ENCODE measurements at regions of chr20 and their contacts with region 1.

Region 1: DNA sequence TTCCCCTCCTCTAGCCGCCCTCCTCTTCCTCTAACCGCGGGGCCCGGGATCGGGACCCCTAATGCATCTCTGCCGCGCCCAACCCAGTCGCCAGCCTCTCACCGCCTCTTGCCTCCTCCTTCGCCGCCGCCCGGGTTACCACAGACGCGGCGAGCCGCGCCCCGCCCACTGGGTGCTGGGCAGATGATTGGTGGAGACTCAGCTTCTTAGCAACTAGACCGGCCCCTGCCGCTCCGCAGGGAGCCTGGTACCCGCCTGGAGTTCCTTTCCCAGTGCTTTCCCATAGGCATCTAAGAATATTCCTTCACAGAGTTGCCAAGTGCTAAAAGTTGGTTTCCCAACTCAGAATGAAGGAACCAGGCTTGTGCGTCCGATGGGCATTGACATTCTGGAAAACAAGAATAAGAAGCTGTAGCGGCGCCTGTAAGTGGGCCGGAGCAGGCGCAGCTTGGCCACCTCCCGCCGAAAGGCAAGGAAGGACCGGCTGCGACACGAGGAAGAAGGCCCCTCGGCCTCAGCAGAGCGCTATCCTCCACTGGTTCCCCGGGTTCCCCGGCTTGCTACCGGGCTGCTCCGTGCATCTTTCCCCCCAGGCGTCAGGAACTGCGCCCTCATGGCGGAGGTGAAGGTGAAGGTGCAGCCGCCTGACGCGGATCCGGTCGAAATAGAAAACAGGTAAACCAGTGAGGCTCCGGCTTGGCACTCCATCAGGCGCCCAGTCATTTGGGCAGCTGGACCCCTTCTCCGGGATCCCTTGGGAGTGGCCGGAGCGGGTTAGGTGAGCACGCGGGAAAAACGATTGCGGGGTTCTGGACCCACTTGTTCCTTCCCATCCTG is at the starts of genes DZANK1 and POLR3F:
- DNase-seq: peak; percentile 92
- H3K4me3 ChIP-seq: peak within 1 kb of the TSS; percentile 74 to 96 (median 82)
- H3K27ac ChIP-seq: peak within 1 kb of the TSS; percentile 98
- H3K4me1 ChIP-seq: peaks cover 19% of the 10 kb centered on the region
- H3K27me3 ChIP-seq: no peaks in the 10 kb centered on the region
- CTCF ChIP-seq: no peak
- total RNA-seq, gene DZANK1: 2.7 to 2.8 TPM
- total RNA-seq, gene POLR3F: 10.7 to 15.0 TPM

Region 2: GRCh38 chr20:17968366-17969279 is 498.5 kb before region 1 on chr20 and contains the starts of genes MGME1 and SNX5:
- CTCF ChIA-PET with region 1: no interaction called
- dilution Hi-C with region 1: no loop called
- in situ Hi-C with region 1: no loop called
- intact Hi-C with region 1: loop called (anchors 5 kb)
- DNase-seq: peak; percentile 99
- H3K4me3 ChIP-seq: peak within 1 kb of the TSS; percentile 88 to 93 (median 91)
- H3K27ac ChIP-seq: peak within 1 kb of the TSS; percentile 98
- H3K4me1 ChIP-seq: peaks cover 26% of the 10 kb centered on the region
- H3K27me3 ChIP-seq: no peaks in the 10 kb centered on the region
- CTCF ChIP-seq: no peak
- total RNA-seq, gene MGME1: 15.8 to 36.2 TPM
- total RNA-seq, gene SNX5: 68.0 to 137 TPM

Region 3: DNA sequence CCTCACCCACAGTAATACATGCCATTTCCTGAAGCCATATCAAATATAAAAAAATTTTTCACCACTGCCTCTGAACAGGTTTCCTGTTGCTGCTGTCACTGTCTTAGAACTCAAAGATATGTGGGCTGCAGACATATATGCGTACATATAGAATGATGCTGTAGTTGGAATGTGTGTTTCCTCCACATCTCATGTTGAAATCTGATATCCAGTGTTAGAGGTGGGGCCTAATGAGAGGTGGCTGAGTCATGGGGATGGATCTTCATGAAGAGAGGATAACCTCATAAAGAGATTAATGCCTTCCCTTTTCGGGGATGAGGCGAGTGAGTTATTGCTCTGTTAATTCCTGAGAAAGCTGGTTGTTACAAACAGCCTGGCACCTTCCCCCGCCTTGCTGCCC is 338.8 kb after region 1 on chr20:
- CTCF ChIA-PET with region 1: no interaction called
- dilution Hi-C with region 1: no loop called
- in situ Hi-C with region 1: no loop called
- intact Hi-C with region 1: no loop called
- DNase-seq: peak; percentile 48
- H3K4me3 ChIP-seq: no peak overlapping the region
- H3K27ac ChIP-seq: no peak overlapping the region
- H3K4me1 ChIP-seq: no peaks in the 10 kb centered on the region
- H3K27me3 ChIP-seq: no peaks in the 10 kb centered on the region
- CTCF ChIP-seq: no peak

Region 4: DNA sequence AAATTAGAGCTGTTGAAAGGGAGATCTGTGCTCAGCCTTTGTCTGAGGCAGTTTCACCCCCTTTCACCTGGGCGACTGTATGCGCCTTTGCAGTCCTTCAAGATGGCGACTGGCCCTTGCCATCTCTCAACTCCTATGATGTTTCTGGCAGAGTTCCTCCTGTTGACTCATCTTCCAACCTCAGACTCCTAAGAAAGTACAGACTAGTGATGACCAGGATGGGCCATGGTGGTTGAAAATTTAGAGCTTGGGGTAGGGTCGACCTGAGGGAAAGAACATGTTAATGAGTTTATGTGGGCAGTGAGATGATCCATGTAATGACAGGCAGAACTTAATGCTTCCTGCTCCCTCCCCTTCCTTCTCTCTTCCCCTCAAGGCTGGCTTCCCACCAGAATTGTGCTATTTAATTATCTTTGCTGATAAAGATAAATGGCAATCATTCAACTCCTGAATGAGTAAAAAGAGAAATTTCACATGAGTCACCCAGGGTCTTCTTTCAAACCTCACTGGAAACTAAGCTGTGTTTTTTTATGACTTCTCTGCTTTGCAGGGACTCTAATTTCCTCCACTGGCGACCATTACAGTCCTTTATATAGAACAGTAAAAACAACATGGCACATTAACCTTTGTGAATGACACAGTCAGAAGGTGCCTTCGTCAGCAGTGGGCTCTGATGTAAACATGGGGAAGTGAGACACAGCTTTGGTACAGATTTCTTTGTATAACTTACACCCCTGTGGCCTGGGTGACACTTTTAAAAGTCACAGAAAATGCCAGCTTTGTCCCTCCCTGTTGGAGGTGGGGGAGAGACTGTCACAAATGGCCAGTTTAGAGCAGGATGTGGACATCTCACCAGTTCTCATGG is 450.0 kb after region 1 on chr20:
- CTCF ChIA-PET with region 1: no interaction called
- dilution Hi-C with region 1: no loop called
- in situ Hi-C with region 1: no loop called
- intact Hi-C with region 1: no loop called
- DNase-seq: no peak
- H3K4me3 ChIP-seq: no peak overlapping the region
- H3K27ac ChIP-seq: no peak overlapping the region
- H3K4me1 ChIP-seq: no peaks in the 10 kb centered on the region
- H3K27me3 ChIP-seq: no peaks in the 10 kb centered on the region
- CTCF ChIP-seq: no peak